Activated B cell treated with CpG ODN at 0.5 μM for 24 hours (primary cell): ENCODE measurements at regions of chr9 and their contacts with region 1.

Region 1: DNA sequence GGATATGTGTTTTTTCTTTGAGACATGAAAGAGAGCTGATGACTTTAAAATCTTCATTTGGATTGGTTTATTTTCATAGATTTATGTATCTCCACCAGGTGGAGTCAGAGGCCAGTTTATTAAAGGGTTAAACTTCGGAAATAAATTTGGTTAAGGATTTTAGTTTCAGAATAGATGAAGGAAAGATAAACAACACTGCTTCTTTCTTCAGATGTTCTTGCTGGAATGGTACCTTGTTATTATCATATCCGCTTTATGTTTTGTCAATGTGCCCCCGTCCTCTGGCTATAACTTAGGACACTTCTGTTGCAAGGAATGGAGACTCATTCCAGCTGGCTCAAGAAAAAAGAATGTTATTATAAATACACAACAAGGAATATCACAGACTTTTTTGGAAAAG is 81.2 kb downstream of the ALDH1A1 start:
- DNase-seq: no peak
- ATAC-seq: no peak
- H3K4me3 Mint-ChIP-seq: no peak overlapping the region
- H3K27ac Mint-ChIP-seq: no peak overlapping the region
- H3K4me1 Mint-ChIP-seq: no peaks in the 10 kb centered on the region
- H3K27me3 Mint-ChIP-seq: peaks cover 3% of the 10 kb centered on the region
- CTCF ChIP-seq: no peak

Region 2: DNA sequence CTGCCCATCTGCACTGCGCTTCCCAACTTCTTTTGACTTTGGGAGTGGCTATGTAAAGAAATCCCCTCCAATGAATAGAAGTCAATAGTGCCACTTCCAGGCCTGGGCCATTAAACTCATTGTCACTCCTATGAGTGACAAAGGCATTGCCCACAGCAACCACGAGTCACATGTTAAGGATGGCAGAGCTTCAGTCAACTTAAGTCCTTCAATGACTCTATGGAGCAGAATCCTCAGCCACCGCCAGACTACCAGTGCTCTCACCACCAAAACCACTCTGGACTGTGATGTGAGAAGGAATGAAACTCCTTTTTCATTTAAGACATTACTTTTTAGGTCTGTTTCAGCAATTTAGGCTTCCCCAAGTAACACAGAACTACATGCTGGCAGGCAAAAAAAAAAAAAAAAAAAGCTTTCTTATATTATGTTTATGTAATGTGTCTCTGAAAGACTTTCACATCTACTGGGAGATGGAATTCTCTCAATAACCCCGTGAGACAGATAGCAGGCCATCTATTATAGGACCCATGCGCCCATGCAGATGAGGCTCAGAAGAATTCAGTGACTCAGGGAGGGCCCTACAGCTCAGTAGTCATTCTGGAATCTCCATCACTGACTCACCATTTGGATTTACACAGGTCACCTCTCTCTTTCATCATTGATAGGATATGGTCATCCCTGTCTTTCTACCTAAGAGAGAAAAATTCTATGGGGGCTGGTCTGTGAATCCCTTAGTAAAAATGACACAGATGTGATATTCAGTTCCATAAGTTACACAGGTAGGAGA is 1283.9 kb before region 1 on chr9:
- CTCF ChIA-PET with region 1: no interaction called
- POLR2A ChIA-PET with region 1: no interaction called
- intact Hi-C with region 1: no loop called
- DNase-seq: no peak
- ATAC-seq: no peak
- H3K4me3 Mint-ChIP-seq: no peak overlapping the region
- H3K27ac Mint-ChIP-seq: no peak overlapping the region
- H3K4me1 Mint-ChIP-seq: no peaks in the 10 kb centered on the region
- H3K27me3 Mint-ChIP-seq: peaks cover 9% of the 10 kb centered on the region
- CTCF ChIP-seq: no peak

Region 3: DNA sequence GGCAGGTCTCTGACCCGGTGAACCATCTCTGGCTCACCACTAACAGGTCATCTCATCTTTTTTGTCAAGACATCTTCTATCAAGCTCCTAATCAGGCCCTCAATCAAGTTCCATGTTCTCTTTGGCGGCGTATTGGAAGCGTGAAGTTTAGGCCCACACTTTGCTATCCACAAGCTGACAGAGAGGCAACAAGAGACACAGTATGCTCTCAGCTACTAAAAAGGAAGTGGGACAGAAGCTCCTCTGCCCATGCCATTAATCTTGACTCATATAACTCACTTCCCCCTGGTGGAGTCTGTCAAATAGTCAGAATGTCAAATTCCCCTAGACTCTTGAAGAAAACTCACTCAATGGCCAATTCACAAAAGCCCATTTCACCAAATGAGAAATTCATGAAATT is 427.8 kb before region 1 on chr9:
- CTCF ChIA-PET with region 1: no interaction called
- POLR2A ChIA-PET with region 1: no interaction called
- intact Hi-C with region 1: no loop called
- DNase-seq: no peak
- ATAC-seq: peak; percentile 91
- H3K4me3 Mint-ChIP-seq: peak overlapping the region; percentile 59
- H3K27ac Mint-ChIP-seq: peak overlapping the region; percentile 91
- H3K4me1 Mint-ChIP-seq: peaks cover 37% of the 10 kb centered on the region
- H3K27me3 Mint-ChIP-seq: no peaks in the 10 kb centered on the region
- CTCF ChIP-seq: no peak

Region 4: DNA sequence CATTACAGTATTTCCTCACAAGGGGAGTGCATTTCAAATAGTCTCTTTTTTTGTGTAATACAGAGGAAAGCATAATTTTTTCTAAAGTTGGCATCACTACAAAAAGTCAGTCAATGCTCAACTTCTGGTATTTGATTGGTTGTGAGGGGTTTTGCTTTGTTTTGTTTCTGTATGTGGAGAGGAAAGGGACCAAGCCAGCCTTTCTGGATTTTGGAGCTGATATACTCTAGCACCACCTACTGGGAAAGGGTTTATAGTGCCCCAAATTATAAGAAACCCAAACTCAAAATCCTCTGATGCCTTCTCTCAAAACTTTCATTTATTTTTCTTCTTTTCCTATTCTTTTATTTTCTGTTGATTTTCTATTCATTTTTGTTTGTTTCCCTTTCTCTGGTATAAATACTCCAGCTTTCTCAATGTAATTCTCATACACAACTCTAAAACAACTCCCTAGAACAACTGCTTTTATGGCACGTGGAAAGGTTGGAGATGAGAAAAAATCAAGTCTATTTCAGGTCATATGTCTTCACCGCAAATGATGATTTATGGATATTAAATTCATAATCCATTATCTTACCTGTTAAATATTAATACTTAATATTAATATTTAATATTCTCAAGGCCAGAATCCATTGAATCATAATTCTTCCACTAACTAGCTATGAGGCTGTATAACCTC is 210.4 kb after region 1 on chr9:
- CTCF ChIA-PET with region 1: no interaction called
- POLR2A ChIA-PET with region 1: no interaction called
- intact Hi-C with region 1: loop called (anchors 5 kb)
- DNase-seq: no peak
- ATAC-seq: no peak
- H3K4me3 Mint-ChIP-seq: no peak overlapping the region
- H3K27ac Mint-ChIP-seq: no peak overlapping the region
- H3K4me1 Mint-ChIP-seq: no peaks in the 10 kb centered on the region
- H3K27me3 Mint-ChIP-seq: no peaks in the 10 kb centered on the region
- CTCF ChIP-seq: no peak